Endothelial cell of umbilical vein (primary cell): ENCODE measurements at regions of chr16 and their contacts with region 1.

Region 1: GRCh38 chr16:54929090-54930004 is 1.3 kb upstream of the IRX5 start:
- DNase-seq: peak; percentile 98
- H3K4me3 ChIP-seq: peak overlapping the region in 2 of 3 experiments; percentile 46 to 57
- H3K27ac ChIP-seq: peak overlapping the region; percentile 57
- H3K4me1 ChIP-seq: peaks cover 12% of the 10 kb centered on the region
- H3K27me3 ChIP-seq: peaks cover 33 to 56% of the 10 kb centered on the region in 2 experiments
- CTCF ChIP-seq: no peak
- POLR2A ChIP-seq: no peak

Region 2: DNA sequence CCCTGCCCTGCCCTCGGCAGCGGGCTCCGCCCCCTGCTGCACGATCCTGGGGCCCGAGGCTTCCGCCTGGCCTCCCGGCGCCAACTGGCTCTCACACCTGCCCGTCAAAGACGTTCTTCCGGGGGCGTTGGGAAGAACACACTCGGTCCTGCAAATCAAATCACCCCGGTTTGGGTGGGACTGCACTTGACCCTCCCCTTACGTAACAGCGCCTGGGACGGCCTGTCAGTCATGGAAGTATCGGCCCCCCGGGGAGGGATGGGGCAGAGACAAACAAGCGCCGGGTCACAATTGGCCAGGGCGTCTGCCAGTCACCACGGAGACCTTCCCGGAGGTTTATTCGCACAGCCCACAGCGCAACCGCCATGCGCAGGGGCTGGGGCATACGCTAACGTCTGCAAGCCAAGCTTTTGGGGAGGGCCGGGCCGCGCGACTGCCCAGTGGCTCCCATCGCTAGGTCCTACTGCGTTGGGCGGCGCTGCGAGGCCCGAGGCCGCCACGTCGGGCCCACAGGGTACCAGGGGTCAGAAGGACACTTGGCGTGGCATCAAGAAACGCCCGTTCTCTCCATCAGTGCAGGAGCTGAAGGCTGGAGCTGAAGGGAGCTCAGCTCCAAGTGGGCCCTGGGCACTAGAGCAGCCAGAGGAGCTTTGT is 1426.0 kb before region 1 on chr16:
- CTCF ChIA-PET with region 1: no interaction called
- POLR2A ChIA-PET with region 1: no interaction called
- dilution Hi-C with region 1: no loop called
- intact Hi-C with region 1: loop called (anchors 2 kb)
- DNase-seq: peak; percentile 100
- H3K4me3 ChIP-seq: peak overlapping the region in 2 of 3 experiments; percentile 24 to 97
- H3K27ac ChIP-seq: peak overlapping the region; percentile 92
- H3K4me1 ChIP-seq: peaks cover 29% of the 10 kb centered on the region
- H3K27me3 ChIP-seq: no peaks in the 10 kb centered on the region
- CTCF ChIP-seq: no peak
- POLR2A ChIP-seq: peak; percentile 85

Region 3: DNA sequence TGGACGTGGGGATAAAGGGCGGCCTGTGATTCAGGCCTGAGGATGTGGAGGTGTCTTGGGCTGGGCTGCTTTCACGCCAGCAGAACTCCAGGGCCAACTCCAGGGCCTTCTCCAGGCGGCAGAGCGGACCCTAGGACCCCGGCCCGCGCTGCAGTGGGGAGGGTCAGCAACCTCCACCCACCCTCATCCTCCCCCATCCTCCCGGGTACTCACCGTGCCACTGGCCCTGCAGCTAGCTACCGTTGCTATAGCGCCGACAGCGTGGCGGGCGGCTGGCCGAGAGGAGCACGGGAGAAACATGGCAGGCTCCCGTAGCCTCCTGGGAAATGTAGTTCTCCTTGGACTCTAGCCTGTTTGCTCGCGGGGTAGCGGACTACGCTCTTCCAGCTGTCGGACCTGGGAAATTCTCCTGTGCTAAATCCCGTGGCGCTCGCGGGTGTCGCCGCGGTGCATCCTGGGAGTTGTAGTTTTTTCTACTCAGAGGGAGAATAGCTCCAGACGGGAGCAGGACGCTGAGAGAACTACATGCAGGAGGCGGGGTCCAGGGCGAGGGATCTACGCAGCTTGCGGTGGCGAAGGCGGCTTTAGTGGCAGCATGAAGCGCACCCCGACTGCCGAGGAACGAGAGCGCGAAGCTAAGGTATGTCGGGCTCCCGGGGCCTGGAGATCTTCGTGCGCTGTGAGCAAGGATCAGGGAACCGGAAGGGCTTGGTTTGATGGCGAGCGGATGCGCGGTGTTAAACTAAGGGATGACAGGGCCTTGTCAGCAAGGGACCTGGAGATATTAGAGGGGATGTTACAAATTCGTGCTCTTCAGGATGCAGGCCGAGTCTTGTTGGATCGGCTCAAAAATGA is 1225.5 kb before region 1 on chr16 and contains the starts of genes FTO and RPGRIP1L:
- CTCF ChIA-PET with region 1: no interaction called
- POLR2A ChIA-PET with region 1: no interaction called
- dilution Hi-C with region 1: no loop called
- intact Hi-C with region 1: loop called (anchors 10 kb)
- DNase-seq: peak; percentile 100
- H3K4me3 ChIP-seq: peak within 1 kb of the TSS; percentile 42 to 88 (median 87)
- H3K27ac ChIP-seq: peak within 1 kb of the TSS; percentile 36
- H3K4me1 ChIP-seq: peaks cover 3% of the 10 kb centered on the region
- H3K27me3 ChIP-seq: no peaks in the 10 kb centered on the region
- CTCF ChIP-seq: no peak
- POLR2A ChIP-seq: no peak
- total RNA-seq, gene FTO: 77.8 and 87.1 TPM in 2 replicates
- total RNA-seq, gene RPGRIP1L: 9.7 and 13.2 TPM in 2 replicates

Region 4: DNA sequence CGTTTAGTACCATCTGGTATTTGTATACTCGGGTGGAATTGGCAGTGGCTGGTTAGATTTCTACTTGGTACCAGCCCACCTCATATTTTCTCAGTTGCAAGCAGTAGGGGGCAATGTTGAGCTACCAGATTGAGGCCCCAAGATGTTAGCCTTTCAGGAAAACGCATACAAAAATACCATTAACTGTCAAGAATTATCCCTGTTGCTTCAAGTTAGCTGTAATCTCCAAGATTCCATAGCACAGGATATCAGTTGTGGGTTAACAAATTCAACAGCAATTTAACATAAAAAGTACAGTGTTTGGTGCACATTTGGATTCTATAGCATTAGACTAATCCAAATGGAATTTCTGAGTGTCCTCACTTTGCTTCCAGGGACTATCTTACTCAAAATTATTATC is 1037.2 kb before region 1 on chr16:
- CTCF ChIA-PET with region 1: interaction called, 4 read pairs
- POLR2A ChIA-PET with region 1: no interaction called
- dilution Hi-C with region 1: no loop called
- intact Hi-C with region 1: loop called (anchors 5 kb)
- DNase-seq: peak; percentile 72
- H3K4me3 ChIP-seq: no peak overlapping the region
- H3K27ac ChIP-seq: no peak overlapping the region
- H3K4me1 ChIP-seq: peaks cover 23% of the 10 kb centered on the region
- H3K27me3 ChIP-seq: no peaks in the 10 kb centered on the region
- CTCF ChIP-seq: peak; percentile 57 to 66
- POLR2A ChIP-seq: no peak

Region 5: GRCh38 chr16:54286090-54286993 is 643.0 kb before region 1 on chr16 and contains the start of gene IRX3:
- CTCF ChIA-PET with region 1: no interaction called
- POLR2A ChIA-PET with region 1: no interaction called
- dilution Hi-C with region 1: no loop called
- intact Hi-C with region 1: loop called (anchors 1 kb)
- DNase-seq: peak; percentile 22
- H3K4me3 ChIP-seq: peak within 1 kb of the TSS; percentile 37 to 50 (median 42)
- H3K27ac ChIP-seq: no peak within 1 kb of the TSS
- H3K4me1 ChIP-seq: peaks cover 8% of the 10 kb centered on the region
- H3K27me3 ChIP-seq: peaks cover 76 to 94% of the 10 kb centered on the region in 2 experiments
- CTCF ChIP-seq: no peak
- POLR2A ChIP-seq: no peak
- total RNA-seq, gene IRX3: not detected in 2 replicates

Region 6: GRCh38 chr16:54987081-54987480 is 57.7 kb after region 1 on chr16:
- CTCF ChIA-PET with region 1: no interaction called
- POLR2A ChIA-PET with region 1: no interaction called
- dilution Hi-C with region 1: no loop called
- intact Hi-C with region 1: no loop called
- DNase-seq: no peak
- H3K4me3 ChIP-seq: no peak overlapping the region
- H3K27ac ChIP-seq: no peak overlapping the region
- H3K4me1 ChIP-seq: no peaks in the 10 kb centered on the region
- H3K27me3 ChIP-seq: no peaks in the 10 kb centered on the region
- CTCF ChIP-seq: no peak
- POLR2A ChIP-seq: no peak

Region 7: GRCh38 chr16:55257966-55258613 is 328.7 kb after region 1 on chr16:
- CTCF ChIA-PET with region 1: no interaction called
- POLR2A ChIA-PET with region 1: no interaction called
- dilution Hi-C with region 1: no loop called
- intact Hi-C with region 1: loop called (anchors 10 kb)
- DNase-seq: peak; percentile 53
- H3K4me3 ChIP-seq: no peak overlapping the region
- H3K27ac ChIP-seq: no peak overlapping the region
- H3K4me1 ChIP-seq: no peaks in the 10 kb centered on the region
- H3K27me3 ChIP-seq: no peaks in the 10 kb centered on the region
- CTCF ChIP-seq: peak; percentile 74 to 76
- POLR2A ChIP-seq: no peak